Activated B cell treated with CpG ODN at 0.5 μM for 24 hours (primary cell): ENCODE measurements at regions of chr5 and their contacts with region 1.

Region 1: GRCh38 chr5:11494340-11494739 is 409.9 kb downstream of the CTNND2 start:
- DNase-seq: no peak
- ATAC-seq: no peak
- H3K4me3 Mint-ChIP-seq: no peak overlapping the region
- H3K27ac Mint-ChIP-seq: no peak overlapping the region
- H3K4me1 Mint-ChIP-seq: no peaks in the 10 kb centered on the region
- H3K27me3 Mint-ChIP-seq: no peaks in the 10 kb centered on the region
- CTCF ChIP-seq: no peak

Region 2: GRCh38 chr5:10863763-10864383 is 630.5 kb before region 1 on chr5:
- CTCF ChIA-PET with region 1: no interaction called
- POLR2A ChIA-PET with region 1: no interaction called
- intact Hi-C with region 1: loop called (anchors 10 kb)
- DNase-seq: peak; percentile 21
- ATAC-seq: peak; percentile 81
- H3K4me3 Mint-ChIP-seq: no peak overlapping the region
- H3K27ac Mint-ChIP-seq: no peak overlapping the region
- H3K4me1 Mint-ChIP-seq: peaks cover 5% of the 10 kb centered on the region
- H3K27me3 Mint-ChIP-seq: peaks cover 6% of the 10 kb centered on the region
- CTCF ChIP-seq: no peak